A673 (cell line): ENCODE measurements at regions of chr16 and their contacts with region 1.

Region 1: DNA sequence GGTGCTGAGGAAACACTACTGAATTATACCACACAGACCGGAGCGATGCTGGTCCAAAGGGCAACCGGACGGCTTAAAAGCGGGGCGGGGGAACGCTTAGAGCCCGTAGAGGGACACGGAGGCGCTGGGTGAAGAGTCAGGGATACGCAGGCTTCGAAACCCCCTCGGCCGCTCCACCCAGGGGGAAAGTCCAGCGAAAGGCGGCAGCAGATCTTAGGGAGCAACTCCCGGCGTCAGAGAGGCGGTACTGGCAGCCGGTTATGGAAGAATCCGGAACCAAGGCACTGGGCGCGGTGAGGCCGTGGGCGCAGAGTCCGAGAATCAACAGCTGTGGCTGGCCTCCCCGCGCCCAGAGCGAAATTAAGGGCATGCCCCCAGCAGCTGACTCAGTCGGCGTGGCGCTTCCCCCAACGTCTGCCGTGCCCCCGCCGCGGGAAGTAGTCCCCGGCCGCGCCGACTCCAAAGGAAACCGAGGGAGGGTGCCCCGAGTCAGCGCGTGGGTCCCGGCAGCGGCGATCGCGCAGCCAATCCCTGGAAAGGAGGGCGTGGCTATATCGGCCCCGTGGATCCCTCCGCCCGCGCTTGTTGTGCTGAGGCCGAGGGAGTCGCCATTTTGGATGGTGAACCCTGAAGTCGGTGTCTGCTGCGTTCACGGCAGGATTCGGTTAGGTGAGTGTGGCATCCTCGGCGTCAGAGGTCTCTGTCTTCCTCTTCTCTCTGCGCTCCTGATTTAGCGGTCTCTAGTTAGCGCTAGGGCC is at the start of gene IST1:
- DNase-seq: peak; percentile 99
- H3K4me3 ChIP-seq: peak within 1 kb of the TSS; percentile 78
- H3K27ac ChIP-seq: peak within 1 kb of the TSS; percentile 95
- H3K4me1 ChIP-seq: peaks cover 8% of the 10 kb centered on the region
- H3K27me3 ChIP-seq: no peaks in the 10 kb centered on the region
- CTCF ChIP-seq: no peak
- total RNA-seq, gene IST1: 206 TPM in 2 replicates

Region 2: GRCh38 chr16:71808593-71809459 is 86.3 kb before region 1 on chr16 and contains the start of gene AP1G1:
- CTCF ChIA-PET with region 1: no interaction called
- POLR2A ChIA-PET with region 1: no interaction called
- intact Hi-C with region 1: loop called (anchors 5 kb)
- DNase-seq: peak; percentile 99
- H3K4me3 ChIP-seq: peak within 1 kb of the TSS; percentile 87
- H3K27ac ChIP-seq: peak within 1 kb of the TSS; percentile 99
- H3K4me1 ChIP-seq: peaks cover 14% of the 10 kb centered on the region
- H3K27me3 ChIP-seq: no peaks in the 10 kb centered on the region
- CTCF ChIP-seq: no peak
- total RNA-seq, gene AP1G1: 95.6 and 95.8 TPM in 2 replicates

Region 3: DNA sequence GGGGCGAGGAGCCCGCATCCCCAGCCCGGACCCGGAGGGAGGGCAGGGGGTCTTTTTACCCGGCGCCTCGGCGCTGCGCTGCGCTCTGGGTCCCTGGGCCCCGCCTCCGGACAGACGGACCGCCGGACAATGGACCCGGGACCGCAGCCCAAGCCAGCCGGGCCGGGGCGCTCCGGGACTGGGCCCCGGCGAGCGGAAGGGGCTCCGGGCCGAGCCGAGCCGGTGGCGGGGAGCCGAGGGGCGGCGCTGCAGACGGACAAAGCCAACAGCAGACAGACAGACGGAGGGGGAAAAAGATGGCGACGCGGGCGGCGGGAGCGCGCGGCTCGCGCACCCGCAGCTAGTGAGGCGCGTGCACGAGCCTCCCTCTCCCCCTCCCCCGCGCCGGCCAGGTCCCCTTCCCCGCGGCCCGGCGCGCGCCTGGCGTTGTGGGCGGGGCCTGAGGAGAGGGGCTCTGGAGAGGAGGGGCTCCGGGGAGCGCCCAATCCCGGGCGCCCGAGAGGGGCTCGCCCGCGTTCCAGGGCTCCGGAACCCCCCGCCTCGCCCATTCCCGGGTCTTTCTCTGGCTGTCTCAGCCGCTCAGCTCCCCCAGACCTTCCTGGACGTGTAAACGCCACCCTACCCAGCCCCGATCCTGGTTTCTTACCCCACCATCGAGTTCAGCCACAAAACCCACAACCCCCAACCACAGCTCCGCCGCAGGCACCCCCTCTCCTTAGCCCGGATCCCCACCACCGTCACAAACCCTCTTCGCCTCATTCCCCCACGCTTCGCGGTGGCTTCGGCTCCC is 11.1 kb before region 1 on chr16 and contains the start of gene ZNF821:
- CTCF ChIA-PET with region 1: interaction called, 5 read pairs
- POLR2A ChIA-PET with region 1: no interaction called
- intact Hi-C with region 1: loop called (anchors 1 kb)
- DNase-seq: peak; percentile 94
- H3K4me3 ChIP-seq: peak within 1 kb of the TSS; percentile 99
- H3K27ac ChIP-seq: peak within 1 kb of the TSS; percentile 90
- H3K4me1 ChIP-seq: peaks cover 7% of the 10 kb centered on the region
- H3K27me3 ChIP-seq: no peaks in the 10 kb centered on the region
- CTCF ChIP-seq: no peak; the same call in 1 of the 2 replicates
- total RNA-seq, gene ZNF821: 11.1 and 17.9 TPM in 2 replicates

Region 4: GRCh38 chr16:72203401-72203800 is 308.3 kb after region 1 on chr16:
- CTCF ChIA-PET with region 1: no interaction called
- POLR2A ChIA-PET with region 1: no interaction called
- intact Hi-C with region 1: no loop called
- DNase-seq: peak; percentile 37
- H3K4me3 ChIP-seq: no peak overlapping the region
- H3K27ac ChIP-seq: no peak overlapping the region
- H3K4me1 ChIP-seq: no peaks in the 10 kb centered on the region
- H3K27me3 ChIP-seq: no peaks in the 10 kb centered on the region
- CTCF ChIP-seq: no peak